Psoas muscle (tissue), 8 donors: ENCODE measurements at regions of chr18 and their contacts with region 1.

Region 1: GRCh38 chr18:49041435-49042245 is 90.9 kb upstream of the SMAD7 start:
- DNase-seq: peak in 1 of 2 donors; percentile 52
- ATAC-seq: peak; percentile 47 to 78 (median 62)
- H3K4me3 ChIP-seq: no peak overlapping the region
- H3K27ac ChIP-seq: no peak overlapping the region
- H3K4me1 ChIP-seq: no peaks in the 10 kb centered on the region
- H3K27me3 ChIP-seq: no peaks in the 10 kb centered on the region
- CTCF ChIP-seq: peak; percentile 67

Region 2: GRCh38 chr18:48693625-48694262 is 347.9 kb before region 1 on chr18:
- intact Hi-C with region 1: loop called in 1 of 2 experiments (anchors 5 kb)
- DNase-seq: peak in 1 of 2 donors; percentile 22
- ATAC-seq: peak in 3 of 4 donors; percentile 32 to 46 (median 45)
- H3K4me3 ChIP-seq: no peak overlapping the region
- H3K27ac ChIP-seq: peak overlapping the region; percentile 77
- H3K4me1 ChIP-seq: peaks cover 34% of the 10 kb centered on the region
- H3K27me3 ChIP-seq: no peaks in the 10 kb centered on the region
- CTCF ChIP-seq: no peak

Region 3: GRCh38 chr18:48777026-48777743 is 264.5 kb before region 1 on chr18:
- intact Hi-C with region 1: loop called in 1 of 2 experiments (anchors 5 kb)
- DNase-seq: peak; percentile 63 to 81
- ATAC-seq: peak; percentile 62 to 69 (median 64)
- H3K4me3 ChIP-seq: no peak overlapping the region
- H3K27ac ChIP-seq: no peak overlapping the region
- H3K4me1 ChIP-seq: peaks cover 43% of the 10 kb centered on the region
- H3K27me3 ChIP-seq: no peaks in the 10 kb centered on the region
- CTCF ChIP-seq: peak; percentile 82

Region 4: DNA sequence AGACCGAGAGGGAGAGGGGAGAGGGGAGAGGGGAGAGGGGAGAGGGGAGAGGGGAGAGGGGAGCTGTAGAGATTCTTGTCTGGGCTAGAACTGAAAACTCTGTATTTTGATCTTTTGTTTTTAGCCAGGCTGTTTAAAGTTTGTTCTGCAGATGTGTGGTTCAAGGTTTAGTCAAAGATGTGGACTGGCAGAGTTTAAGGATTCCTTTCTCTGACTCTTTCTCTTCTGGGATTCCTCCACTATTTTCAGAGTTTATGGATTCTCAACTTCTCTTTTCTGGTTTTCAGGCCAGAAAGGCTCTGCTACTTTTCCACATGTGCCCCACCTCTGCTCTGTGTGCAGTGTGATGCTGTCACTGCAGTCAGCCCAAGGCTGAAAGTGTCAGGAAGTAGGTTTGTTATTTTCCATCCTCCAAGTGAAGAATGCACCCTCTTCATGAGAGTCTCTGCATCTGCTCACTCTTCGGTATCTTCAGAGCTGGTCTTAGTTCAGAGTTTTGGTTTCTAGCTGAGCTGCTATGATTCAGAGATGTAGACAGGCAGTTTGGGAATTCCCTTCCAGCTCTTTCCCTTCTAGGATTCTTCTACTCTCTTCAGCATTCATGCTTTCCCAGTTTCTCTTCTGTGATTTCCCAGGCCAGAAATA is 40.0 kb after region 1 on chr18:
- intact Hi-C with region 1: no loop called
- DNase-seq: no peak
- ATAC-seq: no peak
- H3K4me3 ChIP-seq: no peak overlapping the region
- H3K27ac ChIP-seq: no peak overlapping the region
- H3K4me1 ChIP-seq: no peaks in the 10 kb centered on the region
- H3K27me3 ChIP-seq: no peaks in the 10 kb centered on the region
- CTCF ChIP-seq: no peak

Region 5: GRCh38 chr18:49094979-49095632 is 53.5 kb after region 1 on chr18:
- intact Hi-C with region 1: no loop called
- DNase-seq: no peak
- ATAC-seq: no peak
- H3K4me3 ChIP-seq: no peak overlapping the region
- H3K27ac ChIP-seq: no peak overlapping the region
- H3K4me1 ChIP-seq: no peaks in the 10 kb centered on the region
- H3K27me3 ChIP-seq: no peaks in the 10 kb centered on the region
- CTCF ChIP-seq: no peak